ENCODE measurements at regions of chr10 and their contacts with region 1.

Region 1: DNA sequence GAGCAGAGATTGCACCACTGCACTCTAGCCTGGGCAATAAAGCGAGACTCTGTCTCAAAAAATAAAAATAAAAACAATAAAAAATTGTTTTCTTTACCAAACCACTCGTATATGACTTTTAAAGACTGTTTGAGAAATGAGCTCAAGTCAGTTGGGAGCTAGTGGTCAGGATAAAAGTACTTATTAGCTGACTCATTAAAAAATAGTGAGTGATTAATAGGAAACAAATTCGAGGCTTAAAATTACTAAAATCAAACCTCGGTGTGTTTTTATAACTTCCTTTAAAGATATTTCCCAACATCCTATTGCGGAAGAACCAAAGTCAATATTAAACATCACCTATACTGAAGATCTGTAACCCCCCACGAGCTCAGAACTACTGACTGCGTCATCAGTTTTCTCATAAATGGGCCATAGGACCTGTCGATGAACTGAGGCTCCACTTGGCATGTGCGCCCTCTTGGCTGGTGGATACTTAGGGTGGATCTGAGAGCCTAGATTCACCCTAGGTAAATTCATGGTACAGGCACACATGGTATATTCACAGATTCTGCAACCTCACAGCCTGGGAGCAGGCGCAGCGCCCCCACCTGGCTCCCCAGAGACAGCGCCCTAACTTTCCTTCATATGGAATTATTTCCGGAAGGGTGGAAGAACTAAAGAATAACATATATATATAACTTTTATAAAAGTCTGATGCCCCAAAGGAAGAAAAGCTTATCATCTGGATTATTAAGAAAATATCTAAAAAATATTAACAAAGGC is 9.2 kb downstream of the MKI67 start:
- DNase-seq: no peak
- CTCF ChIP-seq: peak; percentile 24

Region 2: GRCh38 chr10:128150045-128150493 is 33.0 kb after region 1 on chr10:
- CTCF ChIA-PET with region 1: interaction called, 11 read pairs
- POLR2A ChIA-PET with region 1: no interaction called
- DNase-seq: peak; percentile 92
- CTCF ChIP-seq: peak; percentile 100